Caco-2 (cell line): ENCODE measurements at regions of chr3 and their contacts with region 1.

Region 1: DNA sequence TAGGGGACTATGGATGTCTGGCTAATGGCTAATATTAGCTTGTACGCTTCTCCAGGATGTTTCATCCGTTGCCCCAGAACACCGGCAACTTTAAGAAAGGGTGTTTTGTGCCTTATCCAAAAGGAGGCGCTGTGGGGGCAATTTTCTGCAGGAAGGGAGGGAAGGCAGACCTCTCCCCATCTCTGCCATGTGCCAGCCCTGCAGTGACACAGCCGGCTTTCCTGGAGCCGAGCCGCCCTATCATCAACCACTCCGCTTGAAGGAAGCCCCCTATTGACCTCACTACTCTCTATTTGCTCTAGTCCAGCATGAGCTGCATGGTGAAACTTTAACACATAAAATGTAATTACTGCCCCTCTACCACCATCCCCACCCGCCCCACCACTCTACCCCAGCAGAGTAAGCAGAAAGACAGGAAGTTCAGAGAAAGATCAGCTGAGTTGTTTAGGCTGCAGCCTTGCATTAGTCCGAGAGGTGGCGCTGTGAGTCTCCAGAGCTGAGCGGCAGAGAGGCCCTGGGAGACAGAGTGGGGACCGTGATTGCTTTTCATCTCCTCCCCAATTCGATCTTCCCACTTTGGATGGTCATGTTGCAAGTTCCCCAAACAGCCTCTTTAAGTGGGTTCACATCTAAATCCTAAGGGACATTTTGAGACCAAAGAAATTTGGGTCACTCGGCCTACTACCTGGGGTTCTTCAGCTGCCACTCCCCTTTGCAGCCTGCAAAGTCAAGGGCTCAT is 24.5 kb upstream of the RAD18 start:
- DNase-seq: peak in 1 of 2 experiments; percentile 54
- H3K4me3 ChIP-seq: no peak overlapping the region
- H3K4me3 Mint-ChIP-seq: no peak overlapping the region
- H3K27ac Mint-ChIP-seq: no peak overlapping the region
- H3K4me1 ChIP-seq: no peaks in the 10 kb centered on the region
- H3K4me1 Mint-ChIP-seq: peaks cover 4% of the 10 kb centered on the region
- H3K27me3 ChIP-seq: no peaks in the 10 kb centered on the region
- H3K27me3 Mint-ChIP-seq: no peaks in the 10 kb centered on the region
- CTCF ChIP-seq: peak; percentile 37 to 73

Region 2: DNA sequence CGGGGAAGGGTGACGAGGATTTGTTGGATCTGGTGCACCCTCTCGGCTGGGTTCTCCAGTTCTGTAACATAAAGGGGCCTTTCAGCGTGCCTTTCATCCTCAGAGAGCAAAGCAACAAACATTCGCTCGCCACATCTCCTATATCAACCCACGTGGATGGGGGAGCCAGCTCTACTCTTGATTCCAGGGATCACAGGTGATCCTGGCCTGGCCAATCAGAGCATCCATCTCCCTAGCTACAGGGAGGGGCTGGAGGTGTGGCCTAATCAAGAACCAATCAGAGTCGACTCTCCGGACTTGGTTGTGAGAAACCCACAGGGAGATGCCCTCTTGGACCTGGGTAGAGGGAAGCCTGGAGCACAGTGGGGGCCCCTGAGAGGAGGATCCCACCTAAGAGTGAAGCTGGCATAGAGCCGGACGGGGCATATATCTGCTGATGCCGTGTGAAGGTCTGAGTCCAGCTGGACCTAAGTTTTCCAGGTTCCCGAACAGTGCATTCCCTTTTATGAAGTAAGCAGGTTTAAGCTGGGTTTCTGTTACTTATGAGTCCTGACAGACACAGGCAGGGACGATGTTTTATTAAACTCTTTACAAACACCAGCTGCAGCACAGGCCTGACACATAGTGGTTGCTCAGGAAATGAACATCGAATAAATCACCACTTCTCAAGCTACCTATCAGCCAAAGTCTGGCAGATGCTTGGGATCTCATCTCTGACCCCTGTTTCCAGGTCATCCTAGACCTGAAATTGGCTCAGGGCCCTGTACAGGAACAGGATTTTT is 26.2 kb after region 1 on chr3:
- CTCF ChIA-PET with region 1: interaction called, 19 read pairs
- POLR2A ChIA-PET with region 1: no interaction called
- intact Hi-C with region 1: no loop called
- DNase-seq: no peak
- H3K4me3 ChIP-seq: no peak overlapping the region
- H3K4me3 Mint-ChIP-seq: no peak overlapping the region
- H3K27ac Mint-ChIP-seq: no peak overlapping the region
- H3K4me1 ChIP-seq: no peaks in the 10 kb centered on the region
- H3K4me1 Mint-ChIP-seq: no peaks in the 10 kb centered on the region
- H3K27me3 ChIP-seq: no peaks in the 10 kb centered on the region
- H3K27me3 Mint-ChIP-seq: peaks cover 16% of the 10 kb centered on the region
- CTCF ChIP-seq: peak in 1 of 2 experiments; percentile 26

Region 3: GRCh38 chr3:9026320-9027045 is 38.7 kb after region 1 on chr3:
- CTCF ChIA-PET with region 1: no interaction called
- POLR2A ChIA-PET with region 1: no interaction called
- intact Hi-C with region 1: loop called (anchors 1 kb)
- DNase-seq: no peak
- H3K4me3 ChIP-seq: no peak overlapping the region
- H3K4me3 Mint-ChIP-seq: no peak overlapping the region
- H3K27ac Mint-ChIP-seq: no peak overlapping the region
- H3K4me1 ChIP-seq: no peaks in the 10 kb centered on the region
- H3K4me1 Mint-ChIP-seq: no peaks in the 10 kb centered on the region
- H3K27me3 ChIP-seq: no peaks in the 10 kb centered on the region; the same call in 1 of the 2 replicates
- H3K27me3 Mint-ChIP-seq: peaks cover 15% of the 10 kb centered on the region
- CTCF ChIP-seq: no peak

Region 4: GRCh38 chr3:9067352-9067975 is 79.7 kb after region 1 on chr3:
- CTCF ChIA-PET with region 1: no interaction called
- POLR2A ChIA-PET with region 1: no interaction called
- intact Hi-C with region 1: loop called (anchors 1 kb)
- DNase-seq: peak; percentile 53 to 58
- H3K4me3 ChIP-seq: no peak overlapping the region
- H3K4me3 Mint-ChIP-seq: no peak overlapping the region
- H3K27ac Mint-ChIP-seq: no peak overlapping the region
- H3K4me1 ChIP-seq: no peaks in the 10 kb centered on the region
- H3K4me1 Mint-ChIP-seq: no peaks in the 10 kb centered on the region
- H3K27me3 ChIP-seq: no peaks in the 10 kb centered on the region
- H3K27me3 Mint-ChIP-seq: peaks cover 5% of the 10 kb centered on the region
- CTCF ChIP-seq: peak; percentile 79 to 90

Region 5: DNA sequence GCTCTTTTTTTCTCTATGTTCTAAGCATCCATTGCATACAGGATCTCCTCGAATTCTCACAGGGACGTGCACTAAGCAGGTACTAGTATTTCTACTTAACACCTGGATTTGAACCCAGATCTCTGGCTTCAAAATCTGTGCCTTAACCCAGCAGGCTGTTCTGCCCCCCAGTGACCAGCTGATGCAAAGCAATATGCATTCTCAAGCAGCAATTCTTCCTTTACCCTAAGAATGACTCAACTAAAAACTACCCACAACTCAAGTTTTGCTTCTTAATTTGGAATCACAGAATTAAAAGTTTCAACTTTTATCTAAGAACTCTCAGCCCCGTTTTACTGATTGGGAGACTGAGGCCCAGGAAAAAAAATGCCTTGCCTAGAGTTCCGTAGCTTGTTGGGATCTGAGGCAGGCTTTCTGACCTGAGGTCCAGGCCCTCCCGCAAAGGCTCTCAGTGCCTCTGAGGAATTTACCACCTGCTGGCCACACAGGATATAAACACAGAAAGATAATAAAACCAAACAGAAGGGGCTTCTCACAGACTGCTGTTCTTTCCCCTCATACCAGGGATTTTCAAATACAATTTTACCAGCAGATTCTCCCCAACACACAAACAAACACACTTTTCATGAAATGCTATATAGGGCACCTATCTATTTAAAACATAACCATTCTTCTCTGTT is 90.9 kb after region 1 on chr3:
- CTCF ChIA-PET with region 1: no interaction called
- POLR2A ChIA-PET with region 1: no interaction called
- intact Hi-C with region 1: no loop called
- DNase-seq: no peak
- H3K4me3 ChIP-seq: no peak overlapping the region
- H3K4me3 Mint-ChIP-seq: no peak overlapping the region
- H3K27ac Mint-ChIP-seq: no peak overlapping the region
- H3K4me1 ChIP-seq: 0 out of 2 replicates have a peak, but pooled peaks cover 3% of the 10 kb centered on the region
- H3K4me1 Mint-ChIP-seq: peaks cover 24% of the 10 kb centered on the region
- H3K27me3 ChIP-seq: no peaks in the 10 kb centered on the region
- H3K27me3 Mint-ChIP-seq: no peaks in the 10 kb centered on the region
- CTCF ChIP-seq: peak in 1 of 2 experiments; percentile 32

Region 6: GRCh38 chr3:9101286-9101685 is 113.5 kb after region 1 on chr3:
- CTCF ChIA-PET with region 1: no interaction called
- POLR2A ChIA-PET with region 1: no interaction called
- intact Hi-C with region 1: no loop called
- DNase-seq: no peak
- H3K4me3 ChIP-seq: no peak overlapping the region
- H3K4me3 Mint-ChIP-seq: no peak overlapping the region
- H3K27ac Mint-ChIP-seq: no peak overlapping the region
- H3K4me1 ChIP-seq: no peaks in the 10 kb centered on the region
- H3K4me1 Mint-ChIP-seq: no peaks in the 10 kb centered on the region
- H3K27me3 ChIP-seq: no peaks in the 10 kb centered on the region
- H3K27me3 Mint-ChIP-seq: no peaks in the 10 kb centered on the region
- CTCF ChIP-seq: no peak

Region 7: GRCh38 chr3:9111866-9112265 is 124.1 kb after region 1 on chr3:
- CTCF ChIA-PET with region 1: no interaction called
- POLR2A ChIA-PET with region 1: no interaction called
- intact Hi-C with region 1: no loop called
- DNase-seq: no peak
- H3K4me3 ChIP-seq: no peak overlapping the region
- H3K4me3 Mint-ChIP-seq: no peak overlapping the region
- H3K27ac Mint-ChIP-seq: no peak overlapping the region
- H3K4me1 ChIP-seq: no peaks in the 10 kb centered on the region
- H3K4me1 Mint-ChIP-seq: no peaks in the 10 kb centered on the region
- H3K27me3 ChIP-seq: no peaks in the 10 kb centered on the region
- H3K27me3 Mint-ChIP-seq: peaks cover 3% of the 10 kb centered on the region
- CTCF ChIP-seq: no peak

Region 8: DNA sequence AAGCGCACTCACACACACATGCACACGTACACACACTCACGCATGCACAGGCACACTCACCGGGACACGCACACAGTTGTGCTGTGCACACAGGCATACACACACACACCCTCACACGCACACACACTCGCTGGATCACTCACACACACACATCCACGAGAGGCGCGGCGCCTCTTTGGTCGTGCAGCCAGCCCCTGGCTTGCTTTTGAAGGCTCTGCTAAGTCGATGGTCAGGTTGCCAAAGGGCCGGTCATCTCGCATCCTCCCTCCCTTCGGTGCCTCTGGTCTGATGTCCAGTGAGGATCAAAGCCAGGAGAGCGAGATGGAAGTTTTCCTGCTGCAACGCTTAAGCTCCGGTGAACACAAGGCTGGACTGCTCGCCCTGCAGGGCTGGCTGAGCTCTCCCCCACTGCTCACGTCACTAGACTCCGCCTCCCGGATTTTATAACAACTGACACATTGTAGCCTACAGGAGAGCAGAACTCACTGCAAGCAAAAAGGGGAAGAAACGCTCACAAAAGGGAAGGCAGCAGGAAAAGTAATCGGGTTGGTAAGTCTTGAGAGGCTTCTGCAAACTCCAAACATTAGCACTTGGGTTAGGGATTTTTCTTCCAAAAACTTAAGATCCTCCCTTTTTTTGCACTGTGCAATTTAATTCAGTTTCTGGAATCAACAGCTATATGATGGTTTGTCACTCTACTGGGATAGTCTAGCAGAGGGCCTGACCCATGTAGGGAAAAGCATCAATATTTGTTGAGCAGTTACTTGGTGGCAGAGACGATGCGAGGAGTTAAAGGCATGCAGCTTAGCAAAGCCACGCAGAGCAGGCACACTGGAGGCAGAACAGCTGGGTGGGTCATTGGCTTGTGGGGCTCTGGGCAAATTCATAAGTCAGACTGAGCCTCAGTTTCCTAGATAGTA is 261.7 kb after region 1 on chr3 and contains the start of gene SRGAP3:
- CTCF ChIA-PET with region 1: interaction called, 11 read pairs
- POLR2A ChIA-PET with region 1: no interaction called
- intact Hi-C with region 1: no loop called
- DNase-seq: peak; percentile 87 to 88
- H3K4me3 ChIP-seq: peak within 1 kb of the TSS; percentile 45
- H3K4me3 Mint-ChIP-seq: peak within 1 kb of the TSS; percentile 81
- H3K27ac Mint-ChIP-seq: peak within 1 kb of the TSS; percentile 21
- H3K4me1 ChIP-seq: no peaks in the 10 kb centered on the region; the same call in 1 of the 2 replicates
- H3K4me1 Mint-ChIP-seq: no peaks in the 10 kb centered on the region
- H3K27me3 ChIP-seq: no peaks in the 10 kb centered on the region
- H3K27me3 Mint-ChIP-seq: peaks cover 4% of the 10 kb centered on the region
- CTCF ChIP-seq: peak in 1 of 2 experiments; percentile 41
- total RNA-seq, gene SRGAP3: 1.3 and 1.6 TPM in 2 replicates

Region 9: DNA sequence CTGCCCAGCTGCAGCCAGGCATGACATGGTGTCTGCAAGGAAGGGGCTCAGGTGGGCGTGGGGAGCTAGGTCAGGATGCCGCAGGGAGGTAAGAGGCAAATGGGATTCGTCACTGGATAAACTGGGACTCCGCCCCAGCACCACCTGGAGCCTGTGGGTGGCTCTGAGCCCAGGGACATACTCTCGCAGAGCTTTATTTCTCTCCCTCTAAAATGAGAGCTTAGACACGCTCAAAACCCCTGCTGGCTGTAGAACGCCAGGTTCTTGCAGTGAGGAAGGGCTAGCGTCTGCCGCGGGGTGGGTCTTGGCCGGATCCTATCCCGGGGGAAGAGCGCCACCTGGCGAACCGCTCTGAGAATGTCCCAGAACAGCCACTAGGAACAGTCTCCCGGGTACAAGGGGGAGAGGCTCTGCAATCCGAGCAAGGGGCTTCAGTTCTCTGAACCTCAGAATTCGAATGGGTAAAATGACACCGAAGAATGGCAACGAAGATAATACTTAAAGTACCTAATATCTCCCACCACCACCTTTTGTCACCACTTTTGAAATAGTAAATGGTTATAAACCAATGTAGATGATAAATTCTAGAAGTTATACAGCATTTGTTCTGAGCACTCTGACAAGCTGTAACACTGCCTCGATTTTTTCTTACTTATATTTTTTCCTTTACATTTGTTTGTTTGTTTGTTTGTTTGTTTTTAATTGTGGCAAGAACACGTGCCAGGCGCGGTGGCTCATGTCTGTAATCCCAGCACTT is 314.8 kb after region 1 on chr3:
- CTCF ChIA-PET with region 1: interaction called, 4 read pairs
- POLR2A ChIA-PET with region 1: no interaction called
- intact Hi-C with region 1: loop called (anchors 1 kb)
- DNase-seq: peak; percentile 79 to 85
- H3K4me3 ChIP-seq: no peak overlapping the region
- H3K4me3 Mint-ChIP-seq: no peak overlapping the region
- H3K27ac Mint-ChIP-seq: no peak overlapping the region
- H3K4me1 ChIP-seq: no peaks in the 10 kb centered on the region
- H3K4me1 Mint-ChIP-seq: no peaks in the 10 kb centered on the region
- H3K27me3 ChIP-seq: no peaks in the 10 kb centered on the region
- H3K27me3 Mint-ChIP-seq: peaks cover 3% of the 10 kb centered on the region
- CTCF ChIP-seq: peak; percentile 75 to 85